GM13977 (cell line): ENCODE measurements at regions of chr1 and their contacts with region 1.

Region 1: GRCh38 chr1:115138968-115139367 is 49.7 kb upstream of the TSPAN2 start:
- DNase-seq: peak; percentile 76
- CTCF ChIP-seq: peak; percentile 88

Region 2: DNA sequence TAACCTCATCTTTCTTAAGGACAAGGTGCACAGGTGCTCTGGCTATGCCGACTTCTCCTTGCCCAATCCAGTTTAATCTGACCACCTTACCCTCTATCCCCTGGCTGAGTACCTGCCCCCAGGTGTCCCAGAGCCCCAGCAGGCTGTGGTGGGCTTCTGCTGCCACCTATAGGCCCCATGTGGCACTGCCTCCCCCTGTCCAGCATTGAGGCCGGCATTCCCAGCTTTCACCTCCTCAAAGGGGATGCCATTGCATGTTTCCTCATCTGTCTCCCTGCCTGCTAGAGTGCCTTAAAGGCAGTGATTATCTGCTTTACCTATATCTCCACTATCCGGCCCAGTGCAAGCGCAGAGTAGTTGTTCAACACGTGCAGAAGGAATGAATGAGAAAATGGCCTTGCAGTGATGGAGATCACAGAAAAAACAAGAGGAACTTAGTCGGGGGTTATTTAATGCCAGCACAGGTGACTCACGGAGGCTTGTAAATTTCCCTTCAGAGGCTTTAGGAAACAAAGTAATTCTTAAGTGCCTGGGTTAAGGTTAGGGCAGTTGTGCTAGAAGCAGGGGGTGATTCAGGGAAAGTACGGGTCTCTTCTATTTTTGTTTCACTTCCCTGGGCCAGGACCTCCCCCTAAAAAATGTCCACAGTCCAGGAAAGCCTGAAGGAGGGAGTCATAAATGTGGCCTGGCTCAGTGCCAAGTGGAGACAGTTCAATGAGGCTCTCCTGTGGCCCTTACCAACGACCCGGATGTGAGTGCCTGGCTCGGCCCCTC is 330.9 kb after region 1 on chr1:
- in situ Hi-C with region 1: loop called (anchors 10 kb)
- DNase-seq: peak; percentile 59
- CTCF ChIP-seq: peak; percentile 89

Region 3: GRCh38 chr1:115595279-115596079 is 456.5 kb after region 1 on chr1:
- in situ Hi-C with region 1: loop called (anchors 10 kb)
- DNase-seq: peak; percentile 56
- CTCF ChIP-seq: peak; percentile 97